ENCODE measurements at regions of chr6 and their contacts with region 1.

Region 1: DNA sequence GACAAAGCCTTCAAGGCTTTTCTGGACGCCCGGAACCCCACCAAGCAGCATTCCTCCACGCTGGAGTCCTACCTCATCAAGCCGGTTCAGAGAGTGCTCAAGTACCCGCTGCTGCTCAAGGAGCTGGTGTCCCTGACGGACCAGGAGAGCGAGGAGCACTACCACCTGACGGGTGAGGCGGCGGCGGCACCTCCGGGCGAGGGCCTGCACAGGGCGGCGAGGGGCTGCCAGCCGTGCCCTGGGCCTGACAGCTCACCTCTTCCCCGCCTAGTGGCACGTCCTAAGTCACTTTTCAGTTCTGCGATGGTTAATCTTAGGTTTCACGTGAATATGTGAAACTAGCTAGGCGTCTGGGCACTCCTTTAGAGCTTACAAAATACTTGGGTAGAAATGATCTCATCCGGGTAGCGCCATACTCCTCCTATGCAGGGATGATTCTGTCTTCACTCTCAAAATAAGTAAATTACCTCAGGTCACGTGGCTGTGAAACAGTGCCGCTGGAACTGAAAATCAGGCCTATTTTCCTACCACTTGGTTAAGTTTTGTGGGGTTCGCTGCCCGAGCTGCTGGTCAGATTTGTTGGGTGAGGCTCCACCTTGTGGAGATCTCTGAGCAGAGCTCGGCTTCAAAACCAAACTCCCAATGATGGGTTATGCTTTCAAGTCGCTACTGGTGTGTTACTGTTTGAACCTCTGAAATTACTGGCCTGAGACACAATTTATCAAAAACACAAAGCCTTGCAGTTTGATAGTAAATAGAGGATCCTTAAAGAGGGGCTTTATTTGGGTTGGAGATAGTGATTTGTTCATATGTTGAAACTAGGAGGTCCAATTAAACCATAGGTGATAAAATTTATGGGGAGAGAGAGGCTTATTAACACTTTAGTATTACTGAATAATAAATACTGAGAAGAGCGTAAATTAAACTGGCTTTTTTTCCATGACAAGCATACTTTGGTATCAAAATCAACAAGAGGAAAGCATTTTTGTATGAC is 15.5 kb upstream of the CLDN20 start:
- DNase-seq: peak; percentile 63
- H3K4me3 ChIP-seq: no peak overlapping the region
- H3K27ac ChIP-seq: no peak overlapping the region
- H3K4me1 ChIP-seq: no peaks in the 10 kb centered on the region
- CTCF ChIP-seq: peak; percentile 89

Region 2: GRCh38 chr6:154928325-154928922 is 319.9 kb before region 1 on chr6:
- CTCF ChIA-PET with region 1: no interaction called
- POLR2A ChIA-PET with region 1: no interaction called
- intact Hi-C with region 1: loop called (anchors 1 kb)
- DNase-seq: peak; percentile 80
- H3K4me3 ChIP-seq: no peak overlapping the region
- H3K27ac ChIP-seq: no peak overlapping the region
- H3K4me1 ChIP-seq: peaks cover 22% of the 10 kb centered on the region
- CTCF ChIP-seq: peak; percentile 98

Measured in OCI-LY7 (cell line).